Common myeloid progenitor, CD34-positive (primary cell): ENCODE measurements at regions of chr14 and their contacts with region 1.

Region 1: GRCh38 chr14:21723431-21724045 is 49.9 kb upstream of the OR4E1 start:
- DNase-seq: peak; percentile 35 to 64 (median 63)
- H3K4me3 ChIP-seq: no peak overlapping the region
- H3K27ac ChIP-seq: no peak overlapping the region
- H3K4me1 ChIP-seq: no peaks in the 10 kb centered on the region
- H3K27me3 ChIP-seq: peaks cover 0 to 9% (median 4%) of the 10 kb centered on the region in 5 experiments

Region 2: DNA sequence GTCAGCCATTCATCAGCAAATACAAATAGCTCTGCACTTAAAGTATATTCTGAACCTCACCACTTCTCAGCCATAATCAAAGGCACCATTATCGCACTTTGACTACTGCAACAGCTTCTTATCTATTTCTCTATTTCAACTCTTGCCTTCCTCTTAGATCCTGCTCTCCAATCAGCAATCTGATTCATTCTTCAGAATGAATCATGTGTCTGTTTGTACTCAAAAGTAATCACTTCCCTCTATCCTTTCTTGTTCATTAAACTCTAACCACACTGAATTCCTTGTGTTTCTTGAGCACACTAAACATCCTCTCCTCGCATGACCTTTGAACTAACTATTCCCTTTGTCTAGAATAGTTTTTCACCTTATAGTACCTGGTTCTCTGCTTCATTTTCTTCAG is 37.1 kb before region 1 on chr14:
- CTCF ChIA-PET with region 1: no interaction called
- POLR2A ChIA-PET with region 1: no interaction called
- DNase-seq: no peak
- H3K4me3 ChIP-seq: no peak overlapping the region
- H3K27ac ChIP-seq: no peak overlapping the region
- H3K4me1 ChIP-seq: no peaks in the 10 kb centered on the region
- H3K27me3 ChIP-seq: peaks cover 0 to 6% (median 2%) of the 10 kb centered on the region in 5 experiments

Region 3: GRCh38 chr14:21711360-21711961 is 12.1 kb before region 1 on chr14:
- CTCF ChIA-PET with region 1: interaction called, 20 read pairs
- POLR2A ChIA-PET with region 1: no interaction called
- DNase-seq: peak; percentile 40 to 77 (median 76)
- H3K4me3 ChIP-seq: no peak overlapping the region
- H3K27ac ChIP-seq: no peak overlapping the region
- H3K4me1 ChIP-seq: no peaks in the 10 kb centered on the region
- H3K27me3 ChIP-seq: no peaks in the 10 kb centered on the region